CD14-positive monocyte (primary cell): ENCODE measurements at regions of chr5 and their contacts with region 1.

Region 1: DNA sequence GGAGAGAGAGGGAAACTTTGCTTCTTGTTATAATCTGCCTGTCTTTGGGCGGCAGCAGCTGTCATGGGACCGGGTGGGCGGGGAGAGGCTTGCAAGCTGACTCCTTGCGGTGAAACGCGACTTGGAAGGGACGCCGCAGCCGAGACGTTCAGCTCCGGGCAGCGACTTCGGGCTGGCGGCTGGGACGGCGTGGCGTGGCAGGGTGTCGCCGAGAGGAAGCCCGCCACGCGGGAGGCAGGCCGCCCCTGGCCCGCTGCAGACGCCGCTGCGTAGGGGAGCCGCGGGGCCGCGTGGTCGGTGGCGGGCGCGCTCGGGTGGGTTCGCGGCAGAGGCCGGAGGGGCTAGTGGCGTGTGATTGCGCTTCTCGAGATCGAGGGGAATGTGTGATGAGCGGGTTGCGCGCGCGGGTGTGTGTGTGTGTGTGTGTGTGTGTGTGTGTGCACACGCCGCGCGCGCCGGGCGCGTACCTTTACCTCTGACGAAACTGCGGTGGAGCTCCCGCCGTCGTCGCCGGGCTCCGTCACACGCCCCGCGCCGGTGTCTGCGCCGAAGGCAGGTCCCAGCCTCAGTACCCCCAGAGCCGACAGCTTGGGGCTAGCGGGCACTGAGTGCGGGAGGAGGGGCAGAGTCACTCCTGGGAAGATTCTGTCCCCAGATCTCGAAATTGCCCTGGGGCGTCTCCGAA is 1.7 kb downstream of the PPARGC1B start:
- DNase-seq: peak; percentile 56 to 81 (median 73)
- H3K4me3 ChIP-seq: peak overlapping the region; percentile 82 to 99 (median 95)
- H3K4me3 Mint-ChIP-seq: peak overlapping the region; percentile 88 to 91
- H3K27ac ChIP-seq: peak overlapping the region; percentile 67 to 84
- H3K27ac Mint-ChIP-seq: peak overlapping the region; percentile 69 to 89 (median 84)
- H3K4me1 ChIP-seq: peaks cover 40 to 45% of the 10 kb centered on the region in 2 donors
- H3K4me1 Mint-ChIP-seq: peaks cover 50% of the 10 kb centered on the region
- H3K27me3 ChIP-seq: no peaks in the 10 kb centered on the region
- H3K27me3 Mint-ChIP-seq: no peaks in the 10 kb centered on the region
- CTCF ChIP-seq: no peak

Region 2: GRCh38 chr5:149667084-149667828 is 64.5 kb before region 1 on chr5:
- intact Hi-C with region 1: loop called in 1 of 2 experiments (anchors 5 kb)
- DNase-seq: peak; percentile 36 to 60 (median 51)
- H3K4me3 ChIP-seq: peak overlapping the region in 1 of 3 experiments; percentile 22
- H3K4me3 Mint-ChIP-seq: no peak overlapping the region
- H3K27ac ChIP-seq: peak overlapping the region; percentile 25 to 65
- H3K27ac Mint-ChIP-seq: peak overlapping the region; percentile 52 to 90 (median 87)
- H3K4me1 ChIP-seq: peaks cover 37 to 38% of the 10 kb centered on the region in 2 donors
- H3K4me1 Mint-ChIP-seq: peaks cover 45% of the 10 kb centered on the region
- H3K27me3 ChIP-seq: no peaks in the 10 kb centered on the region
- H3K27me3 Mint-ChIP-seq: peaks cover 0 to 3% (median under 1%) of the 10 kb centered on the region in 3 donors
- CTCF ChIP-seq: peak; percentile 96

Region 3: GRCh38 chr5:149749481-149750365 is 17.9 kb after region 1 on chr5:
- intact Hi-C with region 1: loop called in 1 of 2 experiments (anchors 2 kb)
- DNase-seq: peak; percentile 50 to 83 (median 66)
- H3K4me3 ChIP-seq: peak overlapping the region in 1 of 3 experiments; percentile 23
- H3K4me3 Mint-ChIP-seq: peak overlapping the region in 1 of 2 donors; percentile 40
- H3K27ac ChIP-seq: peak overlapping the region; percentile 3 to 79
- H3K27ac Mint-ChIP-seq: peak overlapping the region; percentile 51 to 91 (median 82)
- H3K4me1 ChIP-seq: peaks cover 37 to 48% of the 10 kb centered on the region in 2 donors
- H3K4me1 Mint-ChIP-seq: peaks cover 56% of the 10 kb centered on the region
- H3K27me3 ChIP-seq: no peaks in the 10 kb centered on the region
- H3K27me3 Mint-ChIP-seq: no peaks in the 10 kb centered on the region
- CTCF ChIP-seq: no peak

Region 4: GRCh38 chr5:150106674-150107426 is 375.1 kb after region 1 on chr5:
- intact Hi-C with region 1: no loop called
- DNase-seq: no peak
- H3K4me3 ChIP-seq: no peak overlapping the region
- H3K4me3 Mint-ChIP-seq: no peak overlapping the region
- H3K27ac ChIP-seq: no peak overlapping the region
- H3K27ac Mint-ChIP-seq: peak overlapping the region in 2 of 7 donors; percentile 13 to 74
- H3K4me1 ChIP-seq: peaks cover 43 to 48% of the 10 kb centered on the region in 2 donors
- H3K4me1 Mint-ChIP-seq: peaks cover 48% of the 10 kb centered on the region
- H3K27me3 ChIP-seq: no peaks in the 10 kb centered on the region
- H3K27me3 Mint-ChIP-seq: peaks cover 0 to 4% (median 1%) of the 10 kb centered on the region in 3 donors
- CTCF ChIP-seq: no peak